K562 (cell line): ENCODE measurements at regions of chr7 and their contacts with region 1.

Region 1: DNA sequence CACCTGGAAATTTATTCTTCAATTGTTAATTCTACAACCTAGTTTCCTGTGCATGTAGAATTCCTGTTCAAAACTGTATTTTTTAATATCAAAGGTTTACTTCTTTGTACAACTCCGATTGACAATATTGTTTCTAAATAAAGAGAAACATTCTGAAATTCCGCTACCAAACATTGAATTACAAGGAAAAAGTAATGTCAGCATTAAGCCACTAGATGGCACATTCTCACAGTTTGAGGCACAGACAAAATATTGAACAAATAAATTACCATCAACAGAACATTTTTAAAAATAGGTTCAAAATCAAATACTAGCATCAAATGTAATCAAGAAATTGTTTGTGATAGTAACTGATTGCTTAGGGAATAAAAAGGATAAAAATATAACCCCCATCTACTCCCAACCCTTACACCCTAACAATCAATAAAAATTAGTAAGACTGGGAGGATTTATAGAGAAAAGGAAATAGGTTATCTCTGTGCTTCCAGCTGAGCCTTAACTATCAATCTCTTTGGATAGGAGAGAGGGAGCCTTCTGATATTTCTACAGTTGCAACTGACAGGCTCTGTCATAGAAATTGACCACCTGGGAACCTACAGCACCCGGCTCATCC is 86.6 kb upstream of the C7orf33 start:
- DNase-seq: peak; percentile 27 to 53 (median 47)
- ATAC-seq: peak; percentile 37; the same call in 1 of the 3 replicates
- H3K4me3 ChIP-seq: no peak overlapping the region
- H3K27ac ChIP-seq: no peak overlapping the region
- H3K4me1 ChIP-seq: no peaks in the 10 kb centered on the region
- H3K27me3 ChIP-seq: peaks cover 23 to 50% of the 10 kb centered on the region in 2 experiments; a peak in 4 of 5 replicates
- CTCF ChIP-seq: peak; percentile 59 to 95 (median 67); a peak in 5 of 6 replicates
- EP300 ChIP-seq: no peak
- POLR2A ChIP-seq: no peak
- RAD21 ChIP-seq: peak; percentile 90 to 91

Region 2: DNA sequence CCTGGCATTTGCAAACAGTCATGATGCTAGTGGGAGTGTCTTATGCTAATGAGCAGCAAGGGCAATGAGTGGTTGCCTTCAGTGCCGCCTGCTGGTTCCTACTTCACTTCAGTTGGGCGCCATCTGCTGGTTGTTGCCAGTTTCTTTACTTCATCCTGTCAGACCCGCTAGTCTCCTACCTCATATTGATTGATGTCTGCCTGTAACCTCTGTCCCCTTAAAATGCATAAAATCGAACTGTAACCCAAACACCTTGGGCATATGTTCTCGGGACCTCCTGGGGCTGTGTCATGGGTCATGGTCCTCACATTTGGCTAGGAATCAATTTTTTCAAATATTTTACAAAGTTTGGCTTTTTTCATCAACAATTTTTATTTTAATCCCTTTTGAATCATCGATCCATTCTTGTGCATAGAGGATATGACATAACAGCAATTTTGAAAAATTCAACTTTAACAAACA is 23.8 kb after region 1 on chr7:
- CTCF ChIA-PET with region 1: interaction called, 6 read pairs
- POLR2A ChIA-PET with region 1: no interaction called
- in situ Hi-C with region 1: no loop called
- intact Hi-C with region 1: loop called (anchors 1 kb)
- DNase-seq: peak; percentile 84 to 94 (median 86)
- ATAC-seq: peak; percentile 100
- H3K4me3 ChIP-seq: no peak overlapping the region
- H3K27ac ChIP-seq: no peak overlapping the region
- H3K4me1 ChIP-seq: peaks cover 2 to 4% of the 10 kb centered on the region in 2 experiments; a peak in 2 of 5 replicates
- H3K27me3 ChIP-seq: peaks cover 3 to 12% of the 10 kb centered on the region in 2 experiments; a peak in 3 of 5 replicates
- CTCF ChIP-seq: peak; percentile 99 to 100 (median 100)
- EP300 ChIP-seq: no peak
- POLR2A ChIP-seq: no peak
- RAD21 ChIP-seq: peak; percentile 54 to 81

Region 3: GRCh38 chr7:148753224-148753623 is 249.2 kb after region 1 on chr7:
- CTCF ChIA-PET with region 1: no interaction called
- POLR2A ChIA-PET with region 1: no interaction called
- in situ Hi-C with region 1: no loop called
- intact Hi-C with region 1: loop called (anchors 10 kb)
- DNase-seq: peak; percentile 59 to 74 (median 68)
- ATAC-seq: peak; percentile 80
- H3K4me3 ChIP-seq: no peak overlapping the region
- H3K27ac ChIP-seq: no peak overlapping the region
- H3K4me1 ChIP-seq: peaks cover 4 to 5% of the 10 kb centered on the region in 2 experiments; a peak in 2 of 5 replicates
- H3K27me3 ChIP-seq: no peaks in the 10 kb centered on the region
- CTCF ChIP-seq: no peak
- EP300 ChIP-seq: no peak
- POLR2A ChIP-seq: no peak
- RAD21 ChIP-seq: no peak

Region 4: DNA sequence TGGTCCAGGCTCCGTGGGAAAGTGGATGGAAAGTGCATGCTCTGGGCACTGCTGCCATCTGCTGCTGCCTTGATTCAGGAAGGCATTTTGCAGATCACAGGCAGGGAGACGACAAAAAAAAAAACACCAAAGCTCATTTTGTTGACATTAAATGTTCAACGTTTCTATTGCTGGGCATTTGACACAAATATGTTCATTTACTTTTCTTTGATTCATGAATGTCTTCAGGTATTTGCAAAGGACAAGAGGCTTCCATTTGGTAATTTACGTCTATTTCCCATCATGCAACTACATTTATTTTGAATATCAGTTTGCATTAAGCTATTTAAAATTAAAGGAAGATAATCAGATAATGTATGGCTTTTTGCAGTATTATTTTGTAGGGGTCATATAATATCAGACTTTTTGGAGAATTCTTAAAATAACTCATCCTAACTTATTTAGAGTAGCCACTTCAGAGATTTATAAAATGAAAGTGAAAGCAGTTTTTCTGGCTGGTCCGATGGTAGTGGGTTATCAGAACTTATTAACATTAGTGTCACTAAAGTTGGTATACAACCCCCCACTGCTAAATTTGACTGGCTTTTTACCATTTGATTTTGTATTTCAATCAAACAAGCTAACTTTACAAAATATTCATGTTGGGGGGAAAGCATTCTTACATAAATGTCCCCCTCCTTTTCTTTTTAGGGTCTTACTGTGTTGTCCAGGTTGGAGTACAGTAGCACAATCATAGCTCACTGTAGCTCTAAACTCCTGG is 459.0 kb after region 1 on chr7:
- CTCF ChIA-PET with region 1: interaction called, 27 read pairs
- POLR2A ChIA-PET with region 1: no interaction called
- in situ Hi-C with region 1: loop called (anchors 5 kb)
- intact Hi-C with region 1: loop called (anchors 1 kb)
- DNase-seq: peak; percentile 61 to 86 (median 72)
- ATAC-seq: peak; percentile 65
- H3K4me3 ChIP-seq: peak overlapping the region; percentile 49
- H3K27ac ChIP-seq: peak overlapping the region; percentile 62
- H3K4me1 ChIP-seq: peaks cover 16 to 32% of the 10 kb centered on the region in 2 experiments; a peak in 4 of 5 replicates
- H3K27me3 ChIP-seq: no peaks in the 10 kb centered on the region
- CTCF ChIP-seq: peak; percentile 89 to 98 (median 97)
- EP300 ChIP-seq: peak; percentile 41; the same call in 1 of the 2 replicates
- POLR2A ChIP-seq: no peak
- RAD21 ChIP-seq: peak; percentile 95 to 96